ENCODE measurements at regions of chr12 and their contacts with region 1.

Region 1: GRCh38 chr12:49358483-49359141 is 8.7 kb upstream of the SPATS2 start:
- DNase-seq: no peak
- ATAC-seq: peak; percentile 99
- H3K4me3 ChIP-seq: no peak overlapping the region
- H3K27ac ChIP-seq: no peak overlapping the region
- H3K4me1 ChIP-seq: no peaks in the 10 kb centered on the region
- H3K27me3 ChIP-seq: no peaks in the 10 kb centered on the region
- CTCF ChIP-seq: peak; percentile 81 to 91 (median 81)
- EP300 ChIP-seq: no peak
- POLR2A ChIP-seq: no peak
- RAD21 ChIP-seq: peak; percentile 98

Region 2: GRCh38 chr12:49225556-49226181 is 132.9 kb before region 1 on chr12:
- CTCF ChIA-PET with region 1: no interaction called
- POLR2A ChIA-PET with region 1: no interaction called
- RAD21 ChIA-PET with region 1: no interaction called
- SMC1A ChIA-PET with region 1: no interaction called
- in situ Hi-C with region 1: no loop called
- intact Hi-C with region 1: no loop called
- DNase-seq: no peak
- ATAC-seq: peak; percentile 23; the same call in 2 of the 3 replicates
- H3K4me3 ChIP-seq: no peak overlapping the region
- H3K27ac ChIP-seq: no peak overlapping the region
- H3K4me1 ChIP-seq: no peaks in the 10 kb centered on the region
- H3K27me3 ChIP-seq: no peaks in the 10 kb centered on the region
- CTCF ChIP-seq: peak in 1 of 3 experiments; percentile 20; a peak in 1 of 6 replicates
- EP300 ChIP-seq: no peak
- POLR2A ChIP-seq: no peak
- RAD21 ChIP-seq: peak; percentile 27; the same call in 1 of the 2 replicates

Region 3: GRCh38 chr12:49331380-49332222 is 27.0 kb before region 1 on chr12:
- CTCF ChIA-PET with region 1: interaction called, 72 read pairs
- POLR2A ChIA-PET with region 1: no interaction called
- RAD21 ChIA-PET with region 1: interaction called, 33 read pairs
- SMC1A ChIA-PET with region 1: interaction called, 30 read pairs
- in situ Hi-C with region 1: no loop called
- intact Hi-C with region 1: no loop called
- DNase-seq: no peak
- ATAC-seq: peak; percentile 85
- H3K4me3 ChIP-seq: no peak overlapping the region
- H3K27ac ChIP-seq: no peak overlapping the region
- H3K4me1 ChIP-seq: no peaks in the 10 kb centered on the region
- H3K27me3 ChIP-seq: peaks cover 3 to 12% of the 10 kb centered on the region in 2 experiments
- CTCF ChIP-seq: peak; percentile 55 to 68 (median 59)
- EP300 ChIP-seq: no peak
- POLR2A ChIP-seq: no peak
- RAD21 ChIP-seq: peak; percentile 58

Region 4: DNA sequence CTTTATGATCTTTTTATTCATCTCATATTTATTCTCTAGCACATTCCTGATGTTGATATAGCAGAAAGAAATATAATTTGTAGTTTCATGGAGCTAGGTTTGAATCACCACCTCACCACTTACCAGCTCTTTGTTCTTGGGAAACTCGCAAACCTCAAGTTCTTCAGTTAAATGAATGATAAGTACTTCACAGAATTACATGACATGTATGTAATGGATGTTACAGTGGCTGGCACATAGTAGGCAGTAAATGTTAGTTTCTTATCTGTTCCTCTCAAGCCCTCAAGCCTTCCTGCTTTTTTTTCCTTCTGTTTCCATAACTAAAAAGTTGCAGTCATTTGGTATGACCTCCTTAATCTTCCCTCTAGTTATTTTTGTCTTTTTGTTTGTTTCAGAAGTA is 63.5 kb after region 1 on chr12:
- CTCF ChIA-PET with region 1: interaction called, 20 read pairs
- POLR2A ChIA-PET with region 1: no interaction called
- RAD21 ChIA-PET with region 1: interaction called, 6 read pairs
- SMC1A ChIA-PET with region 1: interaction called, 5 read pairs
- in situ Hi-C with region 1: no loop called
- intact Hi-C with region 1: no loop called
- DNase-seq: no peak
- ATAC-seq: peak; percentile 42; the same call in 2 of the 3 replicates
- H3K4me3 ChIP-seq: no peak overlapping the region
- H3K27ac ChIP-seq: peak overlapping the region; percentile 24; the same call in 1 of the 2 replicates
- H3K4me1 ChIP-seq: no peaks in the 10 kb centered on the region
- H3K27me3 ChIP-seq: no peaks in the 10 kb centered on the region
- CTCF ChIP-seq: no peak
- EP300 ChIP-seq: no peak
- POLR2A ChIP-seq: no peak
- RAD21 ChIP-seq: no peak

Region 5: DNA sequence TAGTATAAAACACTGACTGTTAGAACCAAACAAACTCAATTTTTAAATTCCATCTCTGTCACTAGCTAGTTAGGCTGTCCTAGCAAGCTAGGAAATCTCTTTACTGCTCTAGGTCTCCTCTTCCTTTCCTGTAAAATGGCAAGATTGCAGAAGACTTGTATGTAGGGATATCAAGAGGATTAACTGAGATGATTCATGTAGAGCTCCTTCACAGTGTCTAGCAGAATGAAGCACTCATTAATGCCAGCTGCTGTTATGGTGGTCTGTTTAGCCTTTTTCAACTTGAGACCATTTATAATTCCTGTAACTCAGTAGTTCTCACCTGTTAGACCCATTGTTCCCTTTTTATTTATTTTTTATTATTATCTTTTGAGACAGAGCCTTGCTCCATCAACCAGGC is 112.4 kb after region 1 on chr12:
- CTCF ChIA-PET with region 1: interaction called, 33 read pairs
- POLR2A ChIA-PET with region 1: no interaction called
- RAD21 ChIA-PET with region 1: interaction called, 8 read pairs
- SMC1A ChIA-PET with region 1: interaction called, 11 read pairs
- in situ Hi-C with region 1: no loop called
- intact Hi-C with region 1: no loop called
- DNase-seq: no peak
- ATAC-seq: peak; percentile 40
- H3K4me3 ChIP-seq: no peak overlapping the region
- H3K27ac ChIP-seq: no peak overlapping the region
- H3K4me1 ChIP-seq: no peaks in the 10 kb centered on the region
- H3K27me3 ChIP-seq: no peaks in the 10 kb centered on the region
- CTCF ChIP-seq: no peak
- EP300 ChIP-seq: no peak
- POLR2A ChIP-seq: no peak
- RAD21 ChIP-seq: no peak

Region 6: GRCh38 chr12:49527361-49528130 is 168.9 kb after region 1 on chr12:
- CTCF ChIA-PET with region 1: interaction called, 40 read pairs
- POLR2A ChIA-PET with region 1: no interaction called
- RAD21 ChIA-PET with region 1: interaction called, 8 read pairs
- SMC1A ChIA-PET with region 1: interaction called, 740 read pairs
- in situ Hi-C with region 1: no loop called
- intact Hi-C with region 1: no loop called
- DNase-seq: no peak
- ATAC-seq: no peak
- H3K4me3 ChIP-seq: no peak overlapping the region
- H3K27ac ChIP-seq: no peak overlapping the region
- H3K4me1 ChIP-seq: no peaks in the 10 kb centered on the region
- H3K27me3 ChIP-seq: no peaks in the 10 kb centered on the region
- CTCF ChIP-seq: no peak
- EP300 ChIP-seq: no peak
- POLR2A ChIP-seq: no peak
- RAD21 ChIP-seq: no peak

Region 7: GRCh38 chr12:49580572-49581535 is 222.2 kb after region 1 on chr12:
- CTCF ChIA-PET with region 1: interaction called, 145 read pairs
- POLR2A ChIA-PET with region 1: interaction called, 5 read pairs
- RAD21 ChIA-PET with region 1: interaction called, 55 read pairs
- SMC1A ChIA-PET with region 1: interaction called, 63 read pairs
- in situ Hi-C with region 1: no loop called
- intact Hi-C with region 1: loop called (anchors 1 kb)
- DNase-seq: no peak
- ATAC-seq: peak; percentile 92
- H3K4me3 ChIP-seq: peak overlapping the region; percentile 57; the same call in 1 of the 2 replicates
- H3K27ac ChIP-seq: peak overlapping the region; percentile 41
- H3K4me1 ChIP-seq: peaks cover 17% of the 10 kb centered on the region
- H3K27me3 ChIP-seq: no peaks in the 10 kb centered on the region
- CTCF ChIP-seq: peak; percentile 89 to 92 (median 90)
- EP300 ChIP-seq: no peak
- POLR2A ChIP-seq: no peak
- RAD21 ChIP-seq: peak; percentile 88

Measured in GM12878 (cell line).